OCI-LY7 (cell line): ENCODE measurements at regions of chr18 and their contacts with region 1.

Region 1: DNA sequence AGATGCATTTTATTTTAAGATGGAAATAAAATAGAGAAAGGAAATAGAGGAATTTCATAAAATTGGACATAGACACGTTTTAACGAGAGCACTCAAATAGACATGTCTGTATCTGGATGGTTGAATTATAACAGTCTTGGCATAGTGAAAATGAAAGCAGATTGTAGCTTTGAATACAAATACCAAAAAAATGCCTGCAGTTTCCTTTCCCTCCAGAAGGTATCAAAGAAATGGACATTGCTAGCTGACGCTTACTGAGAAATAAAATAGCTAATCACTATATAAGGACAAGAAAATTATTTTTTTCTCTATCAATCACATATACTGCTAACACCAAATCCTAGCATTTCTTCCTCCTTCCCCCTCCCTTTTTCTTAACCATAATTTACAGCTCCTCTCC is 11.4 kb upstream of the MAPRE2 start:
- DNase-seq: peak; percentile 31
- H3K4me3 ChIP-seq: peak overlapping the region; percentile 57
- H3K27ac ChIP-seq: peak overlapping the region; percentile 55
- H3K4me1 ChIP-seq: peaks cover 28% of the 10 kb centered on the region
- CTCF ChIP-seq: no peak

Region 2: GRCh38 chr18:34867520-34867919 is 162.2 kb before region 1 on chr18:
- CTCF ChIA-PET with region 1: no interaction called
- POLR2A ChIA-PET with region 1: no interaction called
- intact Hi-C with region 1: no loop called
- DNase-seq: peak; percentile 10
- H3K4me3 ChIP-seq: no peak overlapping the region
- H3K27ac ChIP-seq: no peak overlapping the region
- H3K4me1 ChIP-seq: no peaks in the 10 kb centered on the region
- CTCF ChIP-seq: peak; percentile 61

Region 3: GRCh38 chr18:35040988-35041814 is 11.4 kb after region 1 on chr18 and contains the start of gene MAPRE2:
- CTCF ChIA-PET with region 1: no interaction called
- POLR2A ChIA-PET with region 1: interaction called, 32 read pairs
- intact Hi-C with region 1: no loop called
- DNase-seq: peak; percentile 96
- H3K4me3 ChIP-seq: peak within 1 kb of the TSS; percentile 93
- H3K27ac ChIP-seq: peak within 1 kb of the TSS; percentile 91
- H3K4me1 ChIP-seq: peaks cover 49% of the 10 kb centered on the region
- CTCF ChIP-seq: no peak
- total RNA-seq, gene MAPRE2: 17.1 and 23.2 TPM in 2 replicates

Region 4: GRCh38 chr18:35047697-35048292 is 18.0 kb after region 1 on chr18:
- CTCF ChIA-PET with region 1: no interaction called
- POLR2A ChIA-PET with region 1: interaction called, 32 read pairs
- intact Hi-C with region 1: no loop called
- DNase-seq: no peak
- H3K4me3 ChIP-seq: no peak overlapping the region
- H3K27ac ChIP-seq: no peak overlapping the region
- H3K4me1 ChIP-seq: peaks cover 49% of the 10 kb centered on the region
- CTCF ChIP-seq: no peak

Region 5: GRCh38 chr18:35143622-35144596 is 114.1 kb after region 1 on chr18:
- CTCF ChIA-PET with region 1: no interaction called
- POLR2A ChIA-PET with region 1: interaction called, 7 read pairs
- intact Hi-C with region 1: loop called (anchors 5 kb)
- DNase-seq: peak; percentile 48
- H3K4me3 ChIP-seq: no peak overlapping the region
- H3K27ac ChIP-seq: no peak overlapping the region
- H3K4me1 ChIP-seq: peaks cover 34% of the 10 kb centered on the region
- CTCF ChIP-seq: peak; percentile 71

Region 6: GRCh38 chr18:35240664-35241447 is 211.1 kb after region 1 on chr18 and contains the start of gene ZNF397:
- CTCF ChIA-PET with region 1: no interaction called
- POLR2A ChIA-PET with region 1: interaction called, 3 read pairs
- intact Hi-C with region 1: loop called (anchors 2 kb)
- DNase-seq: peak; percentile 92
- H3K4me3 ChIP-seq: peak within 1 kb of the TSS; percentile 92
- H3K27ac ChIP-seq: peak within 1 kb of the TSS; percentile 59
- H3K4me1 ChIP-seq: peaks cover 5% of the 10 kb centered on the region
- CTCF ChIP-seq: no peak
- total RNA-seq, gene ZNF397: 8.0 and 11.8 TPM in 2 replicates